ENCODE measurements at regions of chr10 and their contacts with region 1.

Region 1: DNA sequence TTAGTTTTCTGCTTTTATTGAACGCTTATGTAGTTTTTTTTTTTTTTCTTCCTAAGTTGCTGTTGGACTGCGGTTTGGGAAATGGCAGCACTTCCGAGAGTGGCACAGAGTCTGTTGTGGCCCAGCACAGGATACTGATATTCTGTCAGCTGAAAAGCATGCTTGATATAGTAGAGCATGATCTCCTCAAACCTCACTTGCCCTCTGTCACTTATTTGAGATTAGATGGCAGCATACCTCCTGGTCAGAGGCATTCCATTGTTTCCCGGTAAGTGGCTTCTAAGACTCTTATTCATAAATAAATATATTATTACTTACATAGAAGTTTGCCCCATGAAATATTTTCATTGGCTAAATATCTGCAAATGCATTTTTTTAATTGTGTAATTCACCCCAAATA is 101.1 kb downstream of the BTAF1 start:
- DNase-seq: no peak
- H3K4me3 ChIP-seq: no peak overlapping the region
- H3K27ac ChIP-seq: no peak overlapping the region
- H3K4me1 ChIP-seq: no peaks in the 10 kb centered on the region
- H3K27me3 ChIP-seq: no peaks in the 10 kb centered on the region
- CTCF ChIP-seq: no peak
- POLR2A ChIP-seq: no peak

Region 2: GRCh38 chr10:93313798-93314197 is 1289.1 kb after region 1 on chr10:
- intact Hi-C with region 1: loop called (anchors 5 kb)
- DNase-seq: no peak
- H3K4me3 ChIP-seq: no peak overlapping the region
- H3K27ac ChIP-seq: no peak overlapping the region
- H3K4me1 ChIP-seq: no peaks in the 10 kb centered on the region
- H3K27me3 ChIP-seq: no peaks in the 10 kb centered on the region
- CTCF ChIP-seq: no peak
- POLR2A ChIP-seq: no peak